K562 (cell line): ENCODE measurements at regions of chr20 and their contacts with region 1.

Region 1: GRCh38 chr20:57409672-57410397 is 18.6 kb downstream of the RBM38 start:
- DNase-seq: peak; percentile 91 to 96 (median 92)
- ATAC-seq: peak; percentile 77
- H3K4me3 ChIP-seq: no peak overlapping the region
- H3K27ac ChIP-seq: peak overlapping the region; percentile 60; the same call in 2 of the 3 replicates
- H3K4me1 ChIP-seq: peaks cover 65 to 79% of the 10 kb centered on the region in 2 experiments
- H3K27me3 ChIP-seq: no peaks in the 10 kb centered on the region
- CTCF ChIP-seq: peak in 1 of 3 experiments; percentile 4; a peak in 1 of 6 replicates
- EP300 ChIP-seq: peak; percentile 95
- POLR2A ChIP-seq: peak; percentile 63; the same call in 1 of the 2 replicates
- RAD21 ChIP-seq: peak; percentile 25 to 27; a peak in 2 of 4 replicates

Region 2: DNA sequence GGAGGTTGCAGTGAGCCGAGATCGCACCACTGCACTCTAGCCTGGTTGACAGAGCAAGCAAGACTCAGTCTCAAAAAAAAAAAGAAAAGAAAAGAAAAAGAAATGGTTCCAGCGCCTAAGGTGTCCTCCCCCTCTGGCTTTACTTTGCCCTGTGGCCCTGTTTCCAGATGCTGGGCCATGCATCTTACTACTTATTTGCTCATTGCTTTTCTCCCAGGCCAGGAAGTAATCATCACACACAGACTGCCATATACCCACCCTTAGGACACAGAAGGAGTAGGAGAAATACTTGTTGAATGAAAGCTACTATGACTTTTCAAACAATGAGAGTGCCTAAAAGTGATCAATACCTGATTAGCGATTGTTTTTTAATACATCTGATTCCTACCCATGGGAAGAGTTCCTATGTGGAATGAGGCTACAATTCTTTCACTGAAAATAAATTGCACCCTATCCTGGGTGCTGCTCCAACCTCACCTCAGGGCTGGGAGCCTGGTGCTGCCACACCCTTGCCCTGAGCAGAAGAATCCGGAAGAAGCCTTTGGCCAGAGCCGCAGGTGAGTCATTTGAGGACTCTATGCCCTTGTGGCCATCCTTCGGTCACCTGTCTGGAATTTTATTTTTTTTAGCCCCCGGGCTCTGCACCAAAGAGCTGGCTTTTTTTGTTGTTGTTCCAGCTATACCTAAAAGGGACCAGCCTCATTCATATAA is 803.5 kb before region 1 on chr20:
- CTCF ChIA-PET with region 1: no interaction called
- POLR2A ChIA-PET with region 1: no interaction called
- in situ Hi-C with region 1: no loop called
- intact Hi-C with region 1: no loop called
- DNase-seq: no peak
- ATAC-seq: no peak
- H3K4me3 ChIP-seq: no peak overlapping the region
- H3K27ac ChIP-seq: no peak overlapping the region
- H3K4me1 ChIP-seq: no peaks in the 10 kb centered on the region; a peak in 1 of 5 replicates
- H3K27me3 ChIP-seq: peaks cover 5 to 33% of the 10 kb centered on the region in 2 experiments; a peak in 3 of 5 replicates
- CTCF ChIP-seq: no peak
- EP300 ChIP-seq: no peak
- POLR2A ChIP-seq: no peak
- RAD21 ChIP-seq: no peak

Region 3: GRCh38 chr20:57223648-57224489 is 186.0 kb before region 1 on chr20:
- CTCF ChIA-PET with region 1: no interaction called
- POLR2A ChIA-PET with region 1: no interaction called
- in situ Hi-C with region 1: no loop called
- intact Hi-C with region 1: no loop called
- DNase-seq: no peak
- ATAC-seq: peak; percentile 38; the same call in 1 of the 3 replicates
- H3K4me3 ChIP-seq: no peak overlapping the region
- H3K27ac ChIP-seq: no peak overlapping the region
- H3K4me1 ChIP-seq: peaks cover 0 to 5% of the 10 kb centered on the region in 2 experiments; a peak in 1 of 5 replicates
- H3K27me3 ChIP-seq: peaks cover 15 to 76% of the 10 kb centered on the region in 2 experiments; a peak in 3 of 5 replicates
- CTCF ChIP-seq: no peak
- EP300 ChIP-seq: no peak
- POLR2A ChIP-seq: no peak
- RAD21 ChIP-seq: 0 out of 4 replicates have a peak, but pooled peaks of 1 of the 2 experiments have one; percentile 4

Region 4: DNA sequence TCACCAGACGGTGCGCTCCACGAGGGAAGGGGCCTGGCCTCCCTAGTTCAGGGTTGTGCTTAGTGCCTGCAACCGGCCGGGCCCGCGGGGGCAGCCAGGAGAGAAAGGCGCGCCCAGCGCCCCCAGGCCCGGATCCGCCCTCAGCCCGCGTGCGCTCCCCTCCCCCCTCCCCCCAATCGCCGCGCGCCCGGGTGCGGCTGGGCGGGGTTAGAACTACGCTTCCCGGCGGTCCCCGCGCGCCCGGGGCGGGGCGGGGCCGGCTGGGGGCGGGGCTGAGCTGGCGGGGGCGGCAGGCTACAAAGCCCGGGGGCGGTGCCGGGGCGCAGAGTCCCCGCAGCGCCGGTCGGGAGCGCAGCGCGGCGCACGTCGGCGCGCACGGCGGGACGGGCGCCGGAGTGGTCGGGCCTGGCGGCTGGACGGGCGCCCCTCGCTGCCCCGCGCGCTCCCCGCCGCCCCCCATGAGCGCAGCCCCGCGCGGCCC is 18.7 kb before region 1 on chr20 and contains the start of gene RBM38:
- CTCF ChIA-PET with region 1: interaction called, 3 read pairs
- POLR2A ChIA-PET with region 1: interaction called, 9 read pairs
- in situ Hi-C with region 1: no loop called
- intact Hi-C with region 1: loop called (anchors 2 kb)
- DNase-seq: peak; percentile 89 to 96 (median 92)
- ATAC-seq: peak; percentile 76
- H3K4me3 ChIP-seq: peak within 1 kb of the TSS; percentile 75
- H3K27ac ChIP-seq: peak within 1 kb of the TSS; percentile 95
- H3K4me1 ChIP-seq: peaks cover 34 to 68% of the 10 kb centered on the region in 2 experiments
- H3K27me3 ChIP-seq: no peaks in the 10 kb centered on the region
- CTCF ChIP-seq: no peak
- EP300 ChIP-seq: no peak
- POLR2A ChIP-seq: peak; percentile 76
- RAD21 ChIP-seq: no peak
- polyA plus RNA-seq, gene RBM38: 0.28 to 0.39 TPM

Region 5: DNA sequence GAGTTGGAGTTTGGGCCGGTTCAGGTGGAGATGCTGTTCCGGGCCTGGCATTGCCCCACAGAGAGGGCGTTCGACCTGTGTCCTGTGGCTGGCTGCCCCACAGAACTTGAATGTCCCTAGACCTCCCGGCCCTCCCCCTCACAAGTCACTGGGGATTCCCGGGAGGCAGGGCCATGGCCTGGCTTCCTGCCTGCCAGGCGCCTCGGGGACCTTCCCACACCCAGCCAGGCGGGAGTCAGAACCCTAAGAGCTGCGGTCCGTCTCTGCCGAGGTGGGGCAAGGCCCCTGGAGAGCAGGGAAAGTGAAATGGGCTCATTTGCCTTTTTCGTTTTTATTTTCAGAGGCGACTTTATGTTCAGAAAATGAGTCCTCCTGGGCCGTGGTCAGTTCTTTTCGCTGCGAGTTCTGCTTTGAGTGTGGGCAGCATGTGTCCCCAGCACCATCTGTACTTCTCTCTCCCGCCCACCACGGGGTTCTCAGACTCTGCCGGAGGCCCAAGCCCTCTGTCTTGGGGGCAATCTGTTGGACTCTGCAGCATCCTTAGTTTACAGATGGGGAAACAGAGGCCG is 10.2 kb before region 1 on chr20:
- CTCF ChIA-PET with region 1: no interaction called
- POLR2A ChIA-PET with region 1: interaction called, 20 read pairs
- in situ Hi-C with region 1: no loop called
- intact Hi-C with region 1: no loop called
- DNase-seq: no peak
- ATAC-seq: no peak
- H3K4me3 ChIP-seq: no peak overlapping the region
- H3K27ac ChIP-seq: no peak overlapping the region
- H3K4me1 ChIP-seq: peaks cover 0 to 48% of the 10 kb centered on the region in 2 experiments; a peak in 2 of 5 replicates
- H3K27me3 ChIP-seq: no peaks in the 10 kb centered on the region
- CTCF ChIP-seq: no peak
- EP300 ChIP-seq: no peak
- POLR2A ChIP-seq: no peak
- RAD21 ChIP-seq: no peak

Region 6: DNA sequence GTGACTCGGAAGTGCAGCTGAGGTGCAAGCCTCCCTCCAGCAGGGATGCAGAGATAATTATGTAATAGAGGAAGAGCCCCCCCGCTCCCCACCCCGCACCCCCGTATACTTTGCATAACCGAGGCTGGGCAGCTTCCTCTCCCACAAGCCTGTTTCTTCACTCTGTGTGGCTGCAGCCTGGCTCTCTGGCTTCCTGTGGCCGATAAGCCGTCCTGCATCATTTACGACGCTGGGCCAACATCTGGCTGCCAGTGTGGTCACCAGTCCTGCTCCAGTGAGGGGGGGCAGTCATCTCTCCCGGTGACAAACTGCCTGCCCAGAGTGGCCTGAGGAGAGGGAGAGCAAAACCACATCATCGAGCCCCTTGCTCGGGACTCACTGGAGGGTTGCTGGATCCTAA is 40.6 kb after region 1 on chr20:
- CTCF ChIA-PET with region 1: no interaction called
- POLR2A ChIA-PET with region 1: interaction called, 4 read pairs
- in situ Hi-C with region 1: no loop called
- intact Hi-C with region 1: loop called (anchors 2 kb)
- DNase-seq: peak; percentile 39 to 68 (median 50)
- ATAC-seq: peak; percentile 45
- H3K4me3 ChIP-seq: no peak overlapping the region
- H3K27ac ChIP-seq: peak overlapping the region; percentile 92; the same call in 1 of the 3 replicates
- H3K4me1 ChIP-seq: peaks cover 51 to 55% of the 10 kb centered on the region in 2 experiments
- H3K27me3 ChIP-seq: no peaks in the 10 kb centered on the region
- CTCF ChIP-seq: no peak
- EP300 ChIP-seq: no peak; the same call in 1 of the 2 replicates
- POLR2A ChIP-seq: no peak
- RAD21 ChIP-seq: no peak

Region 7: DNA sequence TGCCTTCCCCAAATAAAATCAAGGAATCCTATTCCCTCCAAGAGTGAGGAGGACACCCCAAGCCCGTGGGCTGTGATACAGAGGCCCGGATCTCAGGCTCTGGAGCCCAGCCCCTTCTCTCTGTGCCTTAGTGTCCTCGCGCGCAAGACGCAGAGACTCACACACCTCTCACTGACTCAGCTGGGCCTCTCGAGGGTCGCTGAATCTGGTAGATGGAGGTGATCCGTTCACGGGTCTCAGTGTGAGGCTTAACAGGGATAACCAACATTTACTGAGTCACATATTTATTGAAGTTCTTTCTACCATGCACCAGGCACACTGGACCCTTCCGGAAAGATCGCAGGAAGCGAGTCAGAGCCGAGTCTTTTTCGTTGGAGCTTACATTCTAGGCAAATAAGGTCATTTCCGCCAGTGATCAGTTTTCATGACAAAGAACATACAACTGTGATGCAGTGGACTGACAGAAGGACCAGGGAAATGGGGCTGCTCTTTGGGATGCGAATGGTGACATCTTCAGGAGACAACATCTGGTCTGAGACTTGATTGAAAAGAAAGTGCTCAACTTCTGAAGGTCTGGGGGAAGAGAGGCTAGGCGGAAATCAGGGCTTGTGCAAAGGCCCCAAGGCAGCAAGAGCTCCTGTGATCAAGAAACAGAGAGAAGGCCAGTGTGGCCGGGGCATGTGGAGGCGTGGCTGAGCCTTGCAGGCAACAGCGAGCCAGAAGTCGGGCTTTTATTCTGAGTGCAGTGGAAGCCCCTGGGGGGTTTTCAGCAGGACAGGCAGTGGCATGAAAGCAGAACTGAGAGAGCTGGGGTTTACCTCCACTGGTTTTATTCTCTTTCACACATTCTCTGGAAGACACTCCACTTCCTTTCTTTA is 1048.6 kb after region 1 on chr20:
- CTCF ChIA-PET with region 1: no interaction called
- POLR2A ChIA-PET with region 1: no interaction called
- in situ Hi-C with region 1: no loop called
- intact Hi-C with region 1: no loop called
- DNase-seq: no peak
- ATAC-seq: no peak
- H3K4me3 ChIP-seq: no peak overlapping the region
- H3K27ac ChIP-seq: no peak overlapping the region
- H3K4me1 ChIP-seq: peaks cover 0 to 7% of the 10 kb centered on the region in 2 experiments; a peak in 1 of 5 replicates
- H3K27me3 ChIP-seq: peaks cover 0 to 4% of the 10 kb centered on the region in 2 experiments; a peak in 2 of 5 replicates
- CTCF ChIP-seq: no peak
- EP300 ChIP-seq: no peak
- POLR2A ChIP-seq: no peak
- RAD21 ChIP-seq: no peak